ENCODE measurements at regions of chr4 and their contacts with region 1.

Region 1: DNA sequence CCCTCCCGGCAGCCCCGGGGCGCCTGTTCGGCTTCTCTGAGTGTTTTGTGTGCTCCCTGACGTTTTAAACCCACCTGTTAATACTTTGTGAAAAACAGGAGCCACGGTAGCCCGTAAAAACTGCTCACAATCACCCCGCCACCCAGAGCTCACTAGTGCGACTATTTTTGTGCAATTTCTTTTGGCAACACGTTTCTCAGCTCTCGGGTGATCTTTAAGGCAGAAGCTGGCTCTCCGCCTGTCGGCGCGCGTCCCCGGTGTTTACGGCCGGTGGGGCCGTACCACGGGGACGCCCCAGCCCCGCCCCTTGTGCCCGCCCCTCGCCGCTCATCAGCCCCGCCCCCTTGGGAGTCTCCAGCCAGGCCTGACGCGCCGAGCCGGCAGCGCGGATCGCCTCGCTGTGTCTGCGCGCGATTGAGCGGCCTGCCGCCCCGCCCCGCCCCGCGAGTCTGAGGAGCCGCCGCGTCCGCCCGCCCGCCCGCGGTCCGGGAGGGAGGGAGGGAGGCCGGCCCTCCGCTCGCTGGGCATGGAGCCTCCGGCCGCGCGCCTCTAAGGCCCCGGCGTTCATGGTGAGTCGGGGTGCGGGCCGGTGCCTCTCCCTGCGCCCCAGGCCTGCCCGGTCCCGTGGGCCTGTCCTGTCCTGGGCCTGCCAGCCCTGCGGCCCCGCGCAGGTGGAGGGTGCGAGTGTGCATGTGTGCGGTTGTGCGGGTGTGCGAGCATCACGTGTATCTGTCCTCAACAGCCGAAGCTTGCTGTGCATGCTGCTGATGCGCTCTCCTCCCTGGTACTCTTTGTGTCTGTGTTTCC is 56.2 kb upstream of the TADA2B start:
- DNase-seq: peak; percentile 94 to 97 (median 96)
- ATAC-seq: peak; percentile 92 to 96 (median 96)
- H3K4me3 ChIP-seq: peak overlapping the region; percentile 62 to 98 (median 85)
- H3K27ac ChIP-seq: peak overlapping the region; percentile 80 to 98 (median 93)
- H3K4me1 ChIP-seq: peaks cover 6 to 88% (median 51%) of the 10 kb centered on the region in 12 donors
- H3K27me3 ChIP-seq: no peaks in the 10 kb centered on the region
- CTCF ChIP-seq: peak in 2 of 12 donors; percentile 6 to 12
- POLR2A ChIP-seq: peak; percentile 54 to 73

Region 2: DNA sequence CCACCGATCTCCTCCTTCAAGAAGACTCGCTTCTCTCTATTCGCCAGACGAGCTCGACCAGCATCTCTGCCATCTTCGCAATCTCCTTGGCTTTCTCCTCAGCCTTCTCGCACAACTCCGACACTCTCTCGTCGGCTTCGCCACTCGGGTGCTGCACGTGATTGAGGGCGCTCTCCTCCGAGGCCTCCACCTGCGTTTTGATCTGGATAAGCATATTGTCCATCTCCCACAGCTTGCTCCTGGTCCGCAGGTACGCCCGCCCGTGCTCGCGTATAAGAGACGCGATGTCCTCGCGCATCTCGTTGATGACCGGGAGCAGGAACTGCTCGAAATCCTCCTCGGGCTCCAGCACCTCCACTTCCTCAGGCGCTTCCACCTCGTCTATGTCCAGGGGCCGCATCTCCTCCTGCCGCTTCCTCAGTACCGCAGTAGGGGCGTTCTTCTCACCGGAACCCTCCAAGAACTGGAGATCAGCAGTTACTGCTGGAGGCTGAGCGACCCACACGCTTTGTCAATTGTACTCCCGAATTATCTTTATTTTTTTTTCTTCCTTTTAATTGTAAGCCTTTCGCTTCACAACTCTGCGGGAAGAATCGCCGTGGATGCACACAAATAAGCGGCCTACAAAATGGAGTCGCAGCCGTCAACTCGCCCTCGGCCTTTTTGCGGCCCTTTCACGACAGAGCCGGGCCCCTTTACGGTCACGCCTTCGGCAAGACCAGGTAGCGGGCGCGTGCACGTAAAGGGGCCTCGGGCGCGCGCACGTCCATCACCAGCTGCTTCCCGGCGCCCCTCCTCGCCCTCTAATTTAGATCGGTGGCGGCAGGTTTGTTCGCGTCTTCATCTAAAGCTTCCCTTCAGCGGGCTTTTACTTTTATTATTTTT is 277.5 kb before region 1 on chr4 and contains the start of gene MRFAP1L1:
- intact Hi-C with region 1: loop called in 4 of 10 experiments (anchors 10 kb)
- DNase-seq: peak; percentile 97 to 98 (median 98)
- ATAC-seq: peak; percentile 82 to 92 (median 88)
- H3K4me3 ChIP-seq: peak within 1 kb of the TSS; percentile 63 to 97 (median 88)
- H3K27ac ChIP-seq: peak within 1 kb of the TSS; percentile 70 to 95 (median 86)
- H3K4me1 ChIP-seq: peaks cover 0 to 53% (median 43%) of the 10 kb centered on the region in 12 donors
- H3K27me3 ChIP-seq: no peaks in the 10 kb centered on the region
- CTCF ChIP-seq: peak in 3 of 12 donors; percentile 6 to 28 (median 16)
- POLR2A ChIP-seq: peak in 1 of 2 donors; percentile 43
- total RNA-seq, gene MRFAP1L1: 38.2 to 50.7 (median 41.3) TPM

Region 3: DNA sequence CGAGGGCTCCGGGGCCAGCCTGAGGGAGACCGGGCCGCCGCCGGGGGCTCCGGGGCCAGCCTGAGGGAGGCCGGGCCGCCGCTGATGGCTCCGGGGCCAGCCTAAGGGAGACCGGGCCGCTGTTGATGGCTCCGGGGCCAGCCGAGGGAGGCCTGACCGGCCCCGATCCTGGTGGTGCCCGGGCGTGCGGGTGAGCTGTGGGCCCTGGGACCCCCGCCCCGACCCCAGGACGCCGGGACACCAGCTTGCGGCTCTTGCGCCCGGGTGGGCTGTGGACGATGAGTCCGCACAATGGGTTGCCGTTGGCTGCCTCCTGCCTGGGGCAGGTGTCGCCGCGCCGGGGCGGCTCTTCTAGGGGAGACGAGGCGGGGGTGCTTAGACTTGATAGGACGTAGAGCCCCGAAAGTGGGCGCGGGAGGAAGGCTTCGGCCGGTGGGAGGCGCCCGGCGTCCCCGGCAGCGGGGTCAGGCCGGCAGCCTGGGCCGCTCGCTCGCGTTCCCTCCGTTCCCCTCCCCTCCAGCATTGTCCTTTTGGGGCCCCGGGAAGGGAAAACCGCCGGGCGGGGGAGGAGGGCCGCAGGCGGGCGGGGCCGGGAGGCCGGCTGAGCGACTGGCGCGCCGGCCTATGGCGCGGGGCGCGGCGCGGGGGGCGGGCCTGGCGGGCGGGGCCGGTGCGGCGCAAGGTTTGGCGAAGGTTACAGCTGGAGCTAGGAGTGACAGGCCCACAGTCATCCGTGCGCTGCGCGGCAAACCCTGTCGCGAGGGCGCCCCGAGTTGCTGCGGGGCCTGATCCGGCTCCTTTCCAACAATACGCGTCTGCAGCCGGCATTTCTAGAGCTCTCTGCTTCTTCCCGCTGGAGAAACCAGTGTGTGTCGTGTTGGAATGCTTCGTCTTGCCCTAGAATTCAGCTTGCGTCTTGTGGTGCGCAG is 203.7 kb before region 1 on chr4:
- intact Hi-C with region 1: loop called in 5 of 10 experiments (anchors 2 to 10 kb)
- DNase-seq: peak; percentile 93 to 95 (median 94)
- ATAC-seq: peak; percentile 79 to 90 (median 90)
- H3K4me3 ChIP-seq: peak overlapping the region; percentile 76 to 100 (median 99)
- H3K27ac ChIP-seq: peak overlapping the region; percentile 96 to 100 (median 100)
- H3K4me1 ChIP-seq: peaks cover 0 to 60% (median 43%) of the 10 kb centered on the region in 12 donors
- H3K27me3 ChIP-seq: no peaks in the 10 kb centered on the region
- CTCF ChIP-seq: peak in 5 of 12 donors; percentile 24 to 53 (median 27)
- POLR2A ChIP-seq: peak; percentile 73 to 85

Region 4: DNA sequence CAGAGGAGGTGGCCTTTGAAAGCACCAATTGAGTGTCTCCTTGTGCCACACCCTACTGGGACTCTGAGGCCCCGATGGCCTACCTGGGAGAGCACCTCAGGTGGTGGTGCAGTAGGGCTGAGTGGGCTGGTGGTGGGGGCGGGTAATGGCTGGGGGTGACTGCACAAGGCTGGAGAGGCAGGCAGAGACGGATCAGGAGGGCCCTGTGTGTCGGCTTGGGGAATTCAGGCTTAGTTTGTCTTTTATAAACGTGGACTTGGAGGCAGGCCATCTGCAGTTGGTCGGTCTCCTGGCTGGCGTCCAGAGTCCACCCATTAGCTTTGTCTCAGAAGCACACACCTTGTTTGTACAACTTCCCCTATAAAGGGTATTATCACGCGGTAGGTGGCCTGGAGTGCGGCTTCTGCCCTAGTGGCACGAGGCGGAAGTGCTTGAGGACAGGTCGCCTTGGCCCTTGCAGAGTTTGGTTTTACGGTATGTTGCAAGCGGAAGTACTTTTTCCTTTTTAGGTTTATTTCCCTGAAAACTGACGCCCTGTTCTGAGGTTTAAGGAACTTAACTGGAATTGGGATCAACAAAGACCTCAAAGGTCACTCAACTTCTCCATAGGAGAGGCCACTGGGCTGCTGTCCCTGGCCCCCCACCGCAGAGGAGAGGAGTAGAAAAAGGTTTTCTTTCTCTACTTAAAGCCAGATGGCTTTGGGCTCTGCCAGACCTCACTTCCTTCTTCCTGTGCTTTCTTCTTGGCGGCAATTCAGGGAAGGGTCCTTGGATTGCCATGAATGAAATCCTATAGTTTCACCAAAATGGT is 69.3 kb before region 1 on chr4:
- intact Hi-C with region 1: loop called in 3 of 10 experiments (anchors 5 to 10 kb)
- DNase-seq: peak; percentile 46 to 86 (median 73)
- ATAC-seq: peak; percentile 54 to 84 (median 76)
- H3K4me3 ChIP-seq: peak overlapping the region in 1 of 12 donors; percentile 25
- H3K27ac ChIP-seq: peak overlapping the region in 8 of 12 donors; percentile 1 to 93 (median 28)
- H3K4me1 ChIP-seq: peaks cover 0 to 83% (median 25%) of the 10 kb centered on the region in 12 donors
- H3K27me3 ChIP-seq: no peaks in the 10 kb centered on the region
- CTCF ChIP-seq: peak in 9 of 12 donors; percentile 23 to 55 (median 37)
- POLR2A ChIP-seq: no peak

Region 5: DNA sequence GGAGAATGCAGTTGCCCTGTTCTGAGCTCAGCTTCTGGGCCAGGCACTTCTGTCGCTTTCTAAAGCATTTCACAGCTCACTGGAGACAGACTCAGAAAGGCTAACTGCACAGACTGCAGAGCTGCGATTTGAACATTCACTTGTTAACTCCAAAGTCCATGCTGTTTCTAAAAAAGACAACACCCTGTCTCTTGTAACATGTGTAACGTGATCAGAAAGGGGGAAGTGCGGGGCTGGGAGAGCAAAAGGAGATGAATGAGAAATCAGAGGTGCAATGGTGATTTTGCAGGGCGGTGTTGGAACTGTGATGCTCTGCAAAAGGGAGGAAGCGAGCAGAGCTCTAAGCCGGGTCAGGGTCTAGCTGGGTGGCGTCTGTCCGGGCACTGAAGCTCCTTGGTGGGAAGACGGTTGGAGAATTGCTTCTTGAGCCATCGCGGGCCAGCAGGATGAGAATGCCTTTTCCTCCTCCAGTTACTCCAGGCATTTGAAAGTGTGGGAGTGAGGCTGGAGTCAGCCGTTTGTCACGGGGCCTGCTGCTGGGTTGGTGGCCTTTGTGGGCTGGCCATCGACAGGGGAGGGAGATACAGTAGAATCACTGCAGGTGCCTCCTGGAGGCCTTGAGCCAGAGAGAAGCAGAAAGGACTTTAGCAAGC is 57.0 kb before region 1 on chr4:
- intact Hi-C with region 1: no loop called
- DNase-seq: no peak
- ATAC-seq: peak in 1 of 4 donors; percentile 8
- H3K4me3 ChIP-seq: no peak overlapping the region
- H3K27ac ChIP-seq: peak overlapping the region in 3 of 12 donors; percentile 22 to 96 (median 36)
- H3K4me1 ChIP-seq: peaks cover 0 to 72% (median 23%) of the 10 kb centered on the region in 12 donors
- H3K27me3 ChIP-seq: no peaks in the 10 kb centered on the region
- CTCF ChIP-seq: no peak
- POLR2A ChIP-seq: no peak

Region 6: GRCh38 chr4:7067452-7068278 is 80.7 kb after region 1 on chr4 and contains the start of gene GRPEL1:
- intact Hi-C with region 1: loop called in 5 of 10 experiments (anchors 2 to 5 kb)
- DNase-seq: peak in 4 of 5 donors; percentile 99 to 100 (median 100)
- ATAC-seq: peak; percentile 97 to 99 (median 98)
- H3K4me3 ChIP-seq: peak within 1 kb of the TSS; percentile 70 to 99 (median 88)
- H3K27ac ChIP-seq: peak within 1 kb of the TSS; percentile 62 to 97 (median 91)
- H3K4me1 ChIP-seq: peaks cover 3 to 41% (median 22%) of the 10 kb centered on the region in 12 donors
- H3K27me3 ChIP-seq: no peaks in the 10 kb centered on the region
- CTCF ChIP-seq: peak in 1 of 12 donors; percentile 26
- POLR2A ChIP-seq: peak; percentile 97 to 99
- total RNA-seq, gene GRPEL1: 38.6 to 68.1 (median 55.4) TPM

Measured in heart left ventricle (tissue), 16 donors.